ENCODE measurements at regions of chr2 and their contacts with region 1.

Region 1: GRCh38 chr2:163155279-163155883 is 316.8 kb upstream of the KCNH7 start:
- DNase-seq: peak; percentile 63

Region 2: GRCh38 chr2:164657129-164657528 is 1501.7 kb after region 1 on chr2:
- in situ Hi-C with region 1: loop called (anchors 25 kb)
- DNase-seq: peak; percentile 43

Measured in SK-MEL-5 (cell line).